ENCODE measurements at regions of chr22 and their contacts with region 1.

Region 1: GRCh38 chr22:36368359-36368983 is 19.3 kb downstream of the MYH9 start:
- DNase-seq: no peak
- ATAC-seq: no peak
- H3K4me3 ChIP-seq: peak overlapping the region in 1 of 4 donors; percentile 13
- H3K27ac ChIP-seq: peak overlapping the region; percentile 82 to 84 (median 83)
- H3K4me1 ChIP-seq: peaks cover 86 to 97% of the 10 kb centered on the region in 2 donors
- H3K27me3 ChIP-seq: no peaks in the 10 kb centered on the region
- CTCF ChIP-seq: no peak
- POLR2A ChIP-seq: no peak

Region 2: DNA sequence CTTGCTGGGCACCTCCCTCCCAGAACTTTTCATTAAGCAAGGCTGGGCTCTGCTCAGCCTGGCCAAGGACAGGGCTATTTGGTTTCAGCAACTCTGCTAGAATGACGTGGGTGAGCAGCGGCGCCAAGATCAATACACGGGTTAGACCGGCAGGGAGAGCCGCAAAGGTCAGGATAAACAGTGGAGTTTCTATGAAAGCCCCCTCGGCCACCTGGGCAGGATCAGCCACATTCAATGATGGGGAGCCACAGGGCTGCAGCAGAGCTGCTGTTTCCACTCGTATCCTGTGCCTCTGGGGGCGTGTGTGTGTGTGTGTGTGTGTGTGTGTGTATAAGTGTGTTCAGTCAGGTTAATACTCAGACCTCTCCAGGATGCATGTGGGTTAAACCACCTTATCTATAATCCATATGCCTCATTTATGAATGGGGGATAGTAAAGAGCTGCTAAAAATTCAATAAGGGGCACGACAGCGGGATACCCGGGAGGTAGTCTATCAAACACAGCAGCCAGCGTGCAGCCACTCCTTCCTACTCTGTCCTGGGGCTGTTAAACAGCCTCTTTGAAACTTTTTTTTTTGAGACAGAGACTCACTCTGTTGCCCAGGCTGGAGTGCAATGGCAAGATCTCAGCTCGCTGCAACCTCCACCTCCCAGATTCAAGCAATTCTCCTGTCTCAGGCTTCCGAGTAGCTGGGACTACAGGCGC is 15.5 kb before region 1 on chr22:
- in situ Hi-C with region 1: no loop called
- intact Hi-C with region 1: loop called (anchors 2 kb)
- DNase-seq: no peak
- ATAC-seq: peak; percentile 36 to 42
- H3K4me3 ChIP-seq: no peak overlapping the region
- H3K27ac ChIP-seq: peak overlapping the region; percentile 74 to 84 (median 83)
- H3K4me1 ChIP-seq: peaks cover 48 to 65% of the 10 kb centered on the region in 2 donors
- H3K27me3 ChIP-seq: no peaks in the 10 kb centered on the region
- CTCF ChIP-seq: no peak
- POLR2A ChIP-seq: no peak

Measured in gastrocnemius medialis (tissue), 4 donors.